ENCODE measurements at regions of chr6 and their contacts with region 1.

Region 1: GRCh38 chr6:30483677-30484279 is 5.5 kb upstream of the HLA-E start:
- DNase-seq: no peak
- H3K4me3 ChIP-seq: no peak overlapping the region
- CTCF ChIP-seq: peak; percentile 36

Region 2: GRCh38 chr6:30150671-30151395 is 332.9 kb before region 1 on chr6:
- CTCF ChIA-PET with region 1: no interaction called
- POLR2A ChIA-PET with region 1: no interaction called
- DNase-seq: no peak
- H3K4me3 ChIP-seq: no peak overlapping the region
- CTCF ChIP-seq: no peak

Region 3: GRCh38 chr6:30500421-30501355 is 16.9 kb after region 1 on chr6:
- CTCF ChIA-PET with region 1: interaction called, 12 read pairs
- POLR2A ChIA-PET with region 1: no interaction called
- DNase-seq: no peak
- H3K4me3 ChIP-seq: no peak overlapping the region
- CTCF ChIP-seq: no peak

Region 4: GRCh38 chr6:30515932-30516753 is 32.4 kb after region 1 on chr6:
- CTCF ChIA-PET with region 1: interaction called, 35 read pairs
- POLR2A ChIA-PET with region 1: no interaction called
- DNase-seq: peak; percentile 59
- H3K4me3 ChIP-seq: peak overlapping the region; percentile 59
- CTCF ChIP-seq: no peak

Region 5: DNA sequence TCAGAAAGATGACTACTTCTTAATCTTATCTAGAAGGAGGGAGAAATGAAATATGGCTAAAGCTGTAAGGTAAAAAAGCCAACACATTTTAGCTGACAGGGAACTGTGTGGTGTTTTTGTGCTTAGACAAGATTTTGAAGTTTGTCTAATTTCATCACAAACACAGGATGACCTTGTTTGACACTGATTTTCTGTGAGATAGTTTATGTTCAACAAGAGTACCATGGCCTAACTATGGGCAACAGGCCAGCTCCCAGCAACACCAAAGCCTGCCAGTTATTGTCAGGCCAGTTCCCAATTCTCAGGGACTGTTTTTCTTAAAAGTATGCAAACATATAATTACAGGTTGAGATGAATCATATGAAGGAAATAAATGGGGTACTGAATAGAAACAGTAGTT is 82.0 kb after region 1 on chr6:
- CTCF ChIA-PET with region 1: interaction called, 13 read pairs
- POLR2A ChIA-PET with region 1: no interaction called
- DNase-seq: no peak
- H3K4me3 ChIP-seq: no peak overlapping the region
- CTCF ChIP-seq: no peak

Region 6: GRCh38 chr6:30600451-30600961 is 116.7 kb after region 1 on chr6:
- CTCF ChIA-PET with region 1: interaction called, 40 read pairs
- POLR2A ChIA-PET with region 1: no interaction called
- DNase-seq: no peak
- H3K4me3 ChIP-seq: no peak overlapping the region
- CTCF ChIP-seq: no peak